ENCODE measurements at regions of chr13 and their contacts with region 1.

Region 1: DNA sequence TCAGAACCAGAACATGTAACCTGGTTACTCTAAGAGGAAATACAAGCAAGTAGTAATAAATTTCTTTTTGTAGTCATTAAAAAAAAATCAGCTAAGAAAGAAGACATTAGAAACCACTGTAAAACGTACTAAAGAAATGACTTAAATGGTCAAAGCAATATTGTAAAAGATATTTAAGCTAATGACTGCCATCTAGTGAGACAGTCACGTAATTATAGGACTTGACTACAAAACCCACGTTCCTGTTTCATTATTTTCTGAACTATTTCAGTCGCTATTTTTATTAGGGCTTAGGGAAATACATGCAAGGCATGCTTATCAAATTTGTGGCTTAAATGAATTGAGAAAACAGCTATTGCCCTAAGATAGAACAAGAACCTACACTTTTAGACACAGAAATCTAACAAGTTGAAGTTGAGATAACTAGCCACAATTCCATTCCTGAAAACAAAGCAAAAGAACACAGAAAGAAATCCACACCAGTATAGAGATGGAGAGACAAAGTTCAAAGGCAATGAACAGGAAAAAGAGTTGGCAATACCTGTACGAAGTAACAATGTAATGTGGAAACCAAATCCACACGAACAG is 17.9 kb downstream of the ALG5 start:
- DNase-seq: peak; percentile 37
- CTCF ChIP-seq: peak; percentile 54

Region 2: DNA sequence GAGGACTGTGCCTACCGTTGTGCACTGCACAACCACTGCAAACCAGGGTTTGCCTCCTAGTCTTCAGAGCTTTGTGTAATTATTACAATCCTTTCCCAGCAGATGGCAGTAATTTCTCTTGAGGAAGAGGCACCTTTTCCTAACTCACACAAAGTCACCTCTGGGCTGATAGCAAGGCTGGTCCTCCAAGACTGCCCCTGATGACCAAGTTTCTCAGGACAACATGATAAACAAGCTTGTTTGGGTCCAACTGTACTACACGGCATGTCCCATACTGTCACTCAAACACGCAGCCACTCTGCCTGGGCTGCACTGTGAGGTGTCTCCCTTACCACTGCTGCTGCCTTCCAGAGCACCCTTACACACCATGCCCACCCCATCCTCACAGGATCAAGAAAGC is 123.0 kb before region 1 on chr13:
- in situ Hi-C with region 1: loop called (anchors 10 kb)
- DNase-seq: peak; percentile 28
- CTCF ChIP-seq: peak; percentile 45